GM13976 (cell line): ENCODE measurements at regions of chr21 and their contacts with region 1.

Region 1: DNA sequence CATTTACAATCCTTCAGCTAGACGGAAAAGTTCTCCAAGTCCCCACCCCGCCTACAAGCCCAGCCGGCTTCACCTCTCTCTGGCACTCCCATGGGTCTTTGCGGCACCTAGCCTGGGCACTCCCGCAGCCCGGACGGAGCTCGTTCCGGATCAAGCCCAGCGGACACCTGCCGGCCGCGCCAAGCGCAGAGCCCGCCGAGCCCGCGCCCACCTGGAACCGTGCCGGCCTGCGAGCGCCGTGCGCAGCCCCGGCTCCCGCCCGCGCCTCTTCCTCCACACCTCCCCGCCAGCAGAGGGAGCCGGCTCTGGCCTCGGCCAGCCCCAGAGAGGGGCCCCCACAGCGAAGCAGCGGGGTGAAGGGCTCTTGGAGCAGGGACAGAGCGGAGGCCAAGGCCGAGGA is 50.0 kb upstream of the KRTAP19-8 start:
- DNase-seq: no peak
- CTCF ChIP-seq: no peak

Region 2: GRCh38 chr21:30340441-30341241 is 747.7 kb before region 1 on chr21:
- in situ Hi-C with region 1: loop called (anchors 10 kb)
- DNase-seq: peak; percentile 11
- CTCF ChIP-seq: peak; percentile 26